ENCODE measurements at regions of chr1 and their contacts with region 1.

Region 1: DNA sequence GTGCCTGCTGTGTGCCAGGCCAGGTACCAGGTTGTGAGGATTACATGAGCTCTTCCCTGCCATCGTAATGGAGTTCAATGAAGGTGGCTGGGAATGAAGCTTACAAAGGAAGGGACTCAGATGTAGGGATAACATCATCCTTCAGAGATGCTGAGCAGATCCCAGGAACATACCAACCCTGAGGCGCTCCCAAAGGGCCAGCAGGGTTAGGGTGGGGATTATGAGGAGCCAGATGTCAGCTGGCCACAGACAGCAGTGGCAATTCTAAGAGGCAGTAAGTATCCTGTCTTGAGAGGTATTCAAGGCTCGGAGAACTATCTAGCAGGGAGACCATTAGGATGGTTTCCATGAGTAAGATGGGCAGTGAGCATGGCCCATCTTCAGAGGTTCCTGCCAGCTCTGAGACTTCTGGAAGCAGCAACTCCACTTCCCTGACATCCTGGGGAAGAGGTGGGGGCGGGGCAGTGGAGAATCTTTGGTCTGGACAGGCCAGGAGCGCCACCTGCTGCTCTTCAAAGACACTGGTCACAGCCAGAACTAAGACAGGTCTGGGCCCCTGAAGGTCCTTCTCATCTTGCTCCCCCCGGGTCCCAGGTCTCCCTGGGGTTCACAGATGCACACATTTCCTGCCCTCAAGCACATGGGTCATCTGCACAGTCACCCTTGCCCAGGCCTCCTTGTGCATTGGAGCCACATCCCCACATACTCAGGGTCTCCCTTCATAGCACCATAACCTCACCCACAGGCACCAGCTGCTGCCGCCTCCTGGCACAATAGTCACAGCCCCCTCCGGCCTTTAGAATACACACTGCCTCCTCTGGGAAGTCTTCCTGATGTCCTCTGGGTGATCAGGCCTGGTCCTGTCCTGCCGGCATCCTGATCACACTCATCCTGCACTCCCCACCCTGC is 2.7 kb upstream of the SDC3 start:
- DNase-seq: peak; percentile 86
- H3K4me3 Mint-ChIP-seq: no peak overlapping the region
- H3K27ac Mint-ChIP-seq: no peak overlapping the region
- H3K4me1 Mint-ChIP-seq: peaks cover 20% of the 10 kb centered on the region
- H3K27me3 Mint-ChIP-seq: peaks cover 8% of the 10 kb centered on the region
- CTCF ChIP-seq: peak; percentile 86

Region 2: GRCh38 chr1:30718636-30719405 is 192.5 kb before region 1 on chr1:
- CTCF ChIA-PET with region 1: interaction called, 12 read pairs
- intact Hi-C with region 1: loop called (anchors 5 kb)
- DNase-seq: peak; percentile 98
- H3K4me3 Mint-ChIP-seq: peak overlapping the region; percentile 97
- H3K27ac Mint-ChIP-seq: peak overlapping the region; percentile 96
- H3K4me1 Mint-ChIP-seq: no peaks in the 10 kb centered on the region
- H3K27me3 Mint-ChIP-seq: no peaks in the 10 kb centered on the region
- CTCF ChIP-seq: peak; percentile 97

Region 3: GRCh38 chr1:30779294-30780071 is 131.8 kb before region 1 on chr1:
- CTCF ChIA-PET with region 1: interaction called, 19 read pairs
- intact Hi-C with region 1: loop called (anchors 1 kb)
- DNase-seq: peak; percentile 91
- H3K4me3 Mint-ChIP-seq: no peak overlapping the region
- H3K27ac Mint-ChIP-seq: no peak overlapping the region
- H3K4me1 Mint-ChIP-seq: no peaks in the 10 kb centered on the region
- H3K27me3 Mint-ChIP-seq: peaks cover 43% of the 10 kb centered on the region
- CTCF ChIP-seq: peak; percentile 96

Region 4: GRCh38 chr1:30801771-30802198 is 109.5 kb before region 1 on chr1:
- CTCF ChIA-PET with region 1: interaction called, 71 read pairs
- intact Hi-C with region 1: loop called (anchors 1 kb)
- DNase-seq: peak; percentile 87
- H3K4me3 Mint-ChIP-seq: no peak overlapping the region
- H3K27ac Mint-ChIP-seq: no peak overlapping the region
- H3K4me1 Mint-ChIP-seq: peaks cover 19% of the 10 kb centered on the region
- H3K27me3 Mint-ChIP-seq: peaks cover 26% of the 10 kb centered on the region
- CTCF ChIP-seq: peak; percentile 97

Region 5: DNA sequence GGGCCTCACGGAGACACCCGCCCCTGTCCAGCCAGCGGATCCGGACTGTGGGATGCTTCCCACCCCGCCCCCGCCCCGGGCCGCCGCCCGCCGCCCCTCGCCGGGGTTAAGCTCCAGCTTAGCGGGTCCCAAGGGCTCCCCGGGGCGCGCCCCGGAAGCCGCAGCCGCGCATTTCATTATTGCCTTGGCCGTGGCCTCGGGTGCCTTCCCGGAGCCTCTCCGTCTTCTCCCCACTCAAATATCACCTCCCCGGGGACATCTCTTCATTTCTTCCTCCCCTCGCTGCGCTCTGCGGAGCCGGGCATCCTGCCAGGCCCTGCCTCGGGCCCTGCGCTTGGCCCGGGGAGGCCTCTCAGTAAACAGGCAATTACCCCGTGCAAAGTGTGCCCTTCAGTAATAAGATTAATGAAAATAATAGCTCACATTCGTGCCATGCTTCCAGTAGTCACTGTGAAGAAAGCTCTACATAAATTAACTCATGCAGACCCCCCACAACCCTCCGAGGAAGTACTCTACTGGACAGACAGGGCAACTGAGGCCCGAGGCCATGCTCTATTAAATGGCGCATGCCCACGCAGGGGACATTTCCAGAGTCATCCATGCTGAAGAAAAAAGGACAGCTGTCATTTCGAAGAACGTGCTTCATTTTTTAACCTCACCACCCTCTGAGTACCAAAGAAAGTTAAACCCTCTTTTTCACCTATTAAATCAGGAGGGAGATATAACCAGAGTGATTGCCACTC is 103.8 kb before region 1 on chr1:
- CTCF ChIA-PET with region 1: interaction called, 71 read pairs
- intact Hi-C with region 1: no loop called
- DNase-seq: no peak
- H3K4me3 Mint-ChIP-seq: no peak overlapping the region
- H3K27ac Mint-ChIP-seq: no peak overlapping the region
- H3K4me1 Mint-ChIP-seq: peaks cover 8% of the 10 kb centered on the region
- H3K27me3 Mint-ChIP-seq: peaks cover 26% of the 10 kb centered on the region
- CTCF ChIP-seq: no peak

Region 6: GRCh38 chr1:30818568-30819243 is 92.6 kb before region 1 on chr1:
- CTCF ChIA-PET with region 1: no interaction called
- intact Hi-C with region 1: no loop called
- DNase-seq: no peak
- H3K4me3 Mint-ChIP-seq: no peak overlapping the region
- H3K27ac Mint-ChIP-seq: no peak overlapping the region
- H3K4me1 Mint-ChIP-seq: peaks cover 18% of the 10 kb centered on the region
- H3K27me3 Mint-ChIP-seq: no peaks in the 10 kb centered on the region
- CTCF ChIP-seq: no peak

Region 7: GRCh38 chr1:30856260-30856790 is 55.0 kb before region 1 on chr1:
- CTCF ChIA-PET with region 1: no interaction called
- intact Hi-C with region 1: loop called (anchors 2 kb)
- DNase-seq: peak; percentile 32
- H3K4me3 Mint-ChIP-seq: no peak overlapping the region
- H3K27ac Mint-ChIP-seq: no peak overlapping the region
- H3K4me1 Mint-ChIP-seq: peaks cover 25% of the 10 kb centered on the region
- H3K27me3 Mint-ChIP-seq: peaks cover 23% of the 10 kb centered on the region
- CTCF ChIP-seq: no peak

Region 8: GRCh38 chr1:31013187-31013864 is 102.0 kb after region 1 on chr1:
- CTCF ChIA-PET with region 1: no interaction called
- intact Hi-C with region 1: no loop called
- DNase-seq: peak; percentile 12
- H3K4me3 Mint-ChIP-seq: no peak overlapping the region
- H3K27ac Mint-ChIP-seq: no peak overlapping the region
- H3K4me1 Mint-ChIP-seq: peaks cover 51% of the 10 kb centered on the region
- H3K27me3 Mint-ChIP-seq: no peaks in the 10 kb centered on the region
- CTCF ChIP-seq: no peak

Region 9: DNA sequence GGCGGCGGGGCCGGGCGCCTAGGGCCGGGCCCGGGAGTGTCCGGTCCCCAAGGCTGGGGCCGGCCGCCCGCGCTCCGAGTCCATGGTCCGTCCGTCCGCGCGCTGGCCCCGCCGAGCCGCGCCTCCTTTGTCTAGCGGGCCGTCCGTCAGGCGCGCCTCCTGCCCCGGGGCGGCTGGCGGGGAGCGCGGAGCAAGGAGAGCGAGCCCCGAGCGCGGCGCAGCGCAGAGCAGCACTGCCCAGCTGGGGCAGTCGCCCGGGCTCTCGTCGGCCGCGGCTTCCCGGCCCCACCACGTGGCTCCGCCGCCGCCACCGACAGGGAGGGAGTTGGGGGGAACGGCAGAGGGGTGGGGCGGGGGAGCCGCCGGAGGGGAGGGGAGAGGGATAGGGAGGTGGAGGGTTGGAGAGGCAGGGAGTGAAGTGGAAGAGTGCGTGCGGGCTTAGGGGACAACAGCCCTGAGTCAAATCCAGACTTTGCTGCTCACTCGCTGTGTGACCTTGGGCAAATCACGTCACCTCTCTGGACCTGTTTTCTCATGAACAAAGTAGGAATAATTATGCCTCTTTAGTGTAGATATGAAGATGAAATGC is 328.4 kb after region 1 on chr1 and contains the start of gene NKAIN1:
- CTCF ChIA-PET with region 1: no interaction called
- intact Hi-C with region 1: no loop called
- DNase-seq: peak; percentile 36
- H3K4me3 Mint-ChIP-seq: peak within 1 kb of the TSS; percentile 71
- H3K27ac Mint-ChIP-seq: no peak within 1 kb of the TSS
- H3K4me1 Mint-ChIP-seq: peaks cover 8% of the 10 kb centered on the region
- H3K27me3 Mint-ChIP-seq: peaks cover 90% of the 10 kb centered on the region
- CTCF ChIP-seq: no peak
- total RNA-seq, gene NKAIN1: not detected in 2 replicates